Lower leg skin (tissue), 4 donors: ENCODE measurements at regions of chr3 and their contacts with region 1.

Region 1: GRCh38 chr3:38479431-38480092 is 16.6 kb upstream of the EXOG start:
- DNase-seq: no peak
- H3K4me3 ChIP-seq: no peak overlapping the region
- CTCF ChIP-seq: peak in 1 of 3 donors; percentile 78
- POLR2A ChIP-seq: no peak

Region 2: GRCh38 chr3:38343797-38344594 is 135.6 kb before region 1 on chr3:
- intact Hi-C with region 1: no loop called
- DNase-seq: no peak
- H3K4me3 ChIP-seq: no peak overlapping the region
- CTCF ChIP-seq: no peak
- POLR2A ChIP-seq: no peak

Region 3: DNA sequence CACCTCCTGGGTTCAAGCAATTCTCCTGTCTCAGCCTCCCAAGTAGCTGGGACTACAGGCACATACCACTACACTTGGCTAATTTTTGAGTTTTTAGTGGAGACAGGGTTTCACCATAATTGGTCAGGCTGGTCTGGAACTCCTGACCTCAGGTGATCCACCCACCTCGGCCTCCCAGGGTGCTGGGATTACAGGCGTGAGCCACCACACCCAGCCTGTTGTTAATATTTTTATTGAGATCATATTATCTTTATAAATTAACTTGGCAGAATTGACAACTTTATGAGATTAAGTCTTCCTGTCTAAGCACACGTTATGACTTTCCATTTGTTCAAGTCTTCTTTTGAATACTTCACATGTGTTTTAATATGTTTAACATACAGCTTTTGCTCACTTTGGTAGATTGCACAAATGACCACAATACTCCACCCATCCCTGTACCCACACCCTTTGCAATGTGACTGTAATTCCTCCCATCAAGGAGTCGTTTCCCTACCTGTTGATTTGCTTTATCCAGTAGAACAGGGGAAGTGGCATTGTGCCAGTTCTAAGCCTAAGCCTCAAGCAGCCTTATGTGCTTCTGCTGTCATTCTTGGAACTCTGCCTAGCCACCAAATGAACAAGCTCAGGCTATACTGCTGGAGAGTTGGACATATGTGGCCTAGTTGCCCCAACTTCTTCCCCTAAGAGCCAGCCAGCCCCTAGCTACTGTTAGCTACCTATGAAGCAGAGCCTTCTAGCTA is 124.8 kb before region 1 on chr3:
- intact Hi-C with region 1: loop called (anchors 10 kb)
- DNase-seq: peak in 1 of 2 donors; percentile 53
- H3K4me3 ChIP-seq: no peak overlapping the region
- CTCF ChIP-seq: no peak
- POLR2A ChIP-seq: no peak